Adrenal gland (tissue), 19 donors: ENCODE measurements at regions of chr2 and their contacts with region 1.

Region 1: GRCh38 chr2:232979871-232980461 is 33.1 kb downstream of the NGEF start:
- DNase-seq: peak; percentile 68 to 92 (median 84)
- H3K4me3 ChIP-seq: no peak overlapping the region
- H3K27ac ChIP-seq: peak overlapping the region in 1 of 5 donors; percentile 62
- H3K4me1 ChIP-seq: peaks cover 0 to 8% of the 10 kb centered on the region in 2 donors
- H3K27me3 ChIP-seq: no peaks in the 10 kb centered on the region
- CTCF ChIP-seq: peak in 5 of 6 experiments; percentile 3 to 37 (median 19)
- POLR2A ChIP-seq: no peak

Region 2: DNA sequence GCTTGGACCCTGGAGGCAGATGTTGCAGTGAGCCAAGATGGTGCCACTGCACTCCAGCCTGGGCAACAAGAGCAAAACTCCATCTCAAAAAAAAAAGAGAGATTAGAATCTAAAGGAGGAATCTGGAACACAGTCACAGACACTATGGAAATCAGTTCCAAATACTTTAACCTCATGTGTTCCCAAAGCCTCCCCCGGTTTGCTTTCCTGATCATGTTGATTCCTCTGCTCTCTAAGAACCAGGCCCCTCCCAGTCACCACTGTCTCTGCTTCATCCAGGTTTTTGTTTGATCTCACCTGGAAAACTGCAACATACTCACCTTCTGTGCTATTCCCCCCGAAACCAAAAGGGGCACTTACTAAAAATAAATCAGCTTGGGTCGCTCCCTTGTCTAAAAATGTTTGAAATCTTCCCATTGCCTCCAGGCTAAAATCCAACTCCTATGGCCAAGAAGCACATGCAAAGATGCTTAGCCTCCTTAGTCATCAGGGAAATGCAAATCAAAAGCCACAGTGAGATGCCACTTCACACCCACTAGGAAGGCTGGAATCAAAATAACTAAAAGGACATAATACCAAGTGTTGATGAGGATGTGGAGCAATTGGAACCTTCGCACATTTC is 46.3 kb after region 1 on chr2:
- intact Hi-C with region 1: loop called in 1 of 2 experiments (anchors 5 kb)
- DNase-seq: no peak
- H3K4me3 ChIP-seq: no peak overlapping the region
- H3K27ac ChIP-seq: no peak overlapping the region
- H3K4me1 ChIP-seq: no peaks in the 10 kb centered on the region
- H3K27me3 ChIP-seq: no peaks in the 10 kb centered on the region
- CTCF ChIP-seq: no peak
- POLR2A ChIP-seq: no peak